Posterior vena cava (tissue), 2 donors: ENCODE measurements at regions of chr2 and their contacts with region 1.

Region 1: GRCh38 chr2:8999102-8999446 is 4.4 kb downstream of the MBOAT2 start:
- DNase-seq: no peak

Region 2: DNA sequence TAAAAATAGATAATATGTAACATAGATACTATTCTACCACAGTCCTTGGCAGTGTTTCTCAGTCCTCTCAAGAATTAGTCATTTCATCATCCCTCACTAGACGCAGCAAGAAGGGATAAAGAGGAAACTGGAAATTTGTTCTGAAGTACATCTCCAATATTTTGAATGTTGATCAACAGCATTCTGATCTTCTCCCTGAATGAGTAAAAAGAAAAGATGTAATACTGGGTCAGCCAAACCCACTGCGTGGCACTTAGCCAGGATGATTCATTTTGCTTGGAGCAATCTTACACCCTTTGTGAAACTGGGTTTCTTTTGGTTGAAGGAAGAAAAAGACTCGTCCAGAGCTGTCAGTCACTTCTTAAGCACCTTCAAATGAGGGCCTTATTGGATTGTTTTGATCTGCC is 898.3 kb after region 1 on chr2:
- intact Hi-C with region 1: loop called in 1 of 2 experiments (anchors 5 kb)
- DNase-seq: peak; percentile 82